ENCODE measurements at regions of chr14 and their contacts with region 1.

Region 1: DNA sequence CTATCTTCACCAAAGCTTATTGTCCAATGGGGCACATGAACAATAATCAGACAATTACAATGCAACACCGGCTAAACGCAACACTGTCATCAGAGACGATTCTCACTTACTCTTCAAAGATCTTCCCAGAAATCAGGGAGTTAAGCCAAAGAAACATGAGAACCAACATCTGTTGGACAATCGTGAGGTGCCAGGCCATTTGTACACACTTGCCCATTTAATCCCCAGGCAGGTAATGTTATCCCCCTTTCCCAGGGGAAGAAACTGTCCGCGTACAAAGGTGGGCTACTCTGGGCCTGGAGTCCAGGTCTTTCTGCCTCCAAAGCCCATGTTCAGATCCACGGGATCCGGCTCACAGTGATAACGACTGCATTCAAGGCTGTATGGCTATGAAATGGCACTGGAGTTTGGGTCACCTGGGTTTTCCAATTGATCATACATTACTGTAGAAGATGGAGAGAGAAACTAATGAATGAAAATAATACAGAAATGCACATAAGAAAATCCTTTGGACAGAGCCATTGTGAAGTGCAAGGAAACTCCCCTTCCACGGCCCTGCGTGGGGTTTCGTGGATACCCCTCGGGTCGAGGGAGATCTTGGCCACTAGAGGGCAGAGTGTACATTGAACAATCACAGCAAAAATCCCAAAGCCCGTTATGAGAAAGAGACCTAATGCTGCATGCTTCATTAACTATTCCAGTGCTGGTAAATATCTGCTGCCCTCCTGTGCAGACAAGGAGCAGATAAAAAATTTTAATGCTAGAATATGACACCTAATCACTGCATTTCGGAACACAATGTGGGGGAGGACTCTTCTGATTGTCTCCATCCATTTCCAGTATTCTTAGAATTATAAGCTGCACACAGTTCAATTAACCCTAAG is 111.4 kb downstream of the EGLN3 start:
- DNase-seq: peak; percentile 61
- H3K4me3 Mint-ChIP-seq: no peak overlapping the region
- H3K27ac Mint-ChIP-seq: no peak overlapping the region
- H3K4me1 Mint-ChIP-seq: no peaks in the 10 kb centered on the region
- H3K27me3 Mint-ChIP-seq: no peaks in the 10 kb centered on the region

Region 2: DNA sequence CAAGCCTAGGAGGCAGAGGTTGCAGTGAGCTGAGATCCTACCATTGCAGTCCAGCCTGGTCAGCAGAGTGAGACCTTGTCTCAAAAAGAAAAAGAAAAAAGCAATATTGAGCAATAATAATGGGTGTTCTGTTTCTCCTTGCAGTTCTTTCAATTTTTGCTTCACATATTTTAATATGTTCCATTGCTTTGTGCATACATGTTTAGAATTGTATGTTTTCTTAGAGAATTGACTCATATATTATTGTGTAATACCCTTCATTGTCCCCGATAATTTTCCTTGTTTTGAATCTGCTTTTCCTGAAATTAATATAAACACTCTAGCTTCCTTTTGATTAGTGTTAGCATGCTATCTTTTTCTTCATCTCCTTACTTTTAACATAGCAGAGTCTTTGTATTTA is 1039.1 kb before region 1 on chr14:
- CTCF ChIA-PET with region 1: no interaction called
- intact Hi-C with region 1: no loop called
- DNase-seq: no peak
- H3K4me3 Mint-ChIP-seq: no peak overlapping the region
- H3K27ac Mint-ChIP-seq: no peak overlapping the region
- H3K4me1 Mint-ChIP-seq: no peaks in the 10 kb centered on the region
- H3K27me3 Mint-ChIP-seq: no peaks in the 10 kb centered on the region

Region 3: DNA sequence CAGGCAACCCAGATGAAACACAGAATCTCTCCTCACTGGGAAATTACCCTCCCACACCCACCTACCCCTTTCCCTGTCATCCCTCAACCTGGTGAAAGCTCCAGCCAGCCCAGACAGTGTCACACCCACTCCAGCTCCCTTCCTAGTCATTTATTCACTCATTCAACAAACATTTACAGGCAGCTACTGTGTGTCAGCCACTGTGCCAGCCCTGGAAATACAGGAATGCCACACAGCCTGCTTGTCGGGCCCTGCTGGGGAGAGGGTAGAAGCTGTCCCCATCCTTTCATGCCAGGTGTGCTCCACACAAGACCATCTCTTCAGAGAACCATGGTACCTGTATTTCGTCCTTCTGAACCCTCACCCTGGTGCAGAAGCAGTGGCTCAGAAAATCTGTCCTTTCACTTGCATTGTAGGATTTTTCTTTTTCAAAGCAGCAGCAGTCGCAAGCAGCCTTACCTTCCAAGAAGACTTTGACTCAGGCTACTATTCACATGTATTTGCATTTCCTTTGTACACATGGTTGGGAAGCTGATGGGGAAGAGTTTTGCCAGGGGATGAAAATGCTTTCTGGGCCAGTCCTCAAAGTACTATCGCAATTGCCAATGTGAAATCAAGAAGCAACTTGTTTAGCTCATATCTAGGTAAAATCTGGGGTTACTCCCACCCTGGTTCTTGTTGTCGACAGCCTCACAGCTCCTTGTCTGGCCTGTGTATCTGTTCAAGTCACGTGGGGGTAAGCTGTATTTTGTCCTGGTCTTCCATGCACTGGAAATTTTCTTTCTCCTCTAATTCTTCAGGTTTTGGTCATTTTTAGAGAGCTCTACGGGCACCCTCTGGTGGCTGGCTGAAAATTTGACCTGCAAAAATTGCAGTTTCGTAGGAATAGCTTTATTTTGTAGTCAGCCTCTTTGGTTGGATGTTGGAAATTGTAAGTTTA is 258.9 kb after region 1 on chr14:
- CTCF ChIA-PET with region 1: interaction called, 14 read pairs
- intact Hi-C with region 1: loop called (anchors 1 kb)
- DNase-seq: peak; percentile 19
- H3K4me3 Mint-ChIP-seq: no peak overlapping the region
- H3K27ac Mint-ChIP-seq: no peak overlapping the region
- H3K4me1 Mint-ChIP-seq: no peaks in the 10 kb centered on the region
- H3K27me3 Mint-ChIP-seq: no peaks in the 10 kb centered on the region

Region 4: DNA sequence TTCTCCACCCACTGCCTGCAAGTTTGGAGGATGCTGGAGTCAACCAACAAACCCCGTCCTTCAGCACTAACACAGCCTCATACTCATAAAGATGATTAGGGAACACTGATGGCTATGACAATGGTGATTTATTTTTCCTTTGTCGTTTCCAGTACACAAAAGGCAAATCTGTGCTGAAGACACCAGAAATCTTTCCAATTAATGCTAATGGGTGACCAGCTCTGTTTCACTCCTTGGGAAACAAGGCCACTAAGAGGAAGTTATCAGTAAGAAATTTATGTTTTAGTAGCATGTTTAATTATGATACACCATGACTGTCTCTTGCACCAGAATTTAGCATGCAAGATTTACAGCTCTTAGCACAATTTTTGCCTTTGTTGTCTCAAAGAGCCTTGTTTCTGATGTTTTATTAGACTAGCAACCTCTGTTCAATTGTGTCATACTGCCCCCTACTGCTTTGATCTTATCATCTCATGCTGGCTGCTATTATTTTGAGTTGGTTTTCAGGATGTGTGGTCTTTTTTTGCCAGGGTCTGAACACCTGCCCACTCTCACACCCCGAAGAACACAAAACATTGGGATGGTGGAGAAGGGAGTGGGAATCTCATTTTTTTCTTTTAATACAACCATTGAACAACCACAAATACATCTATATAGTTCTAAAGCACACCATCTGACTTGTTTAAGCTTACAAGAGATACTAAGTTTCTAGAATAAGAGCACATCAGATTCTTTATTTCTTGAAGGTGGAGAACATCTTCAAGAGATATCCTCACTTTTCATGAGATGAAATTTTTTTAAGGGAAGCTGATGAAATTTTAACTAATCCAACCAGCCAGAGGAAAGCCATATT is 461.7 kb after region 1 on chr14:
- CTCF ChIA-PET with region 1: interaction called, 3 read pairs
- intact Hi-C with region 1: loop called (anchors 2 kb)
- DNase-seq: peak; percentile 13
- H3K4me3 Mint-ChIP-seq: no peak overlapping the region
- H3K27ac Mint-ChIP-seq: no peak overlapping the region
- H3K4me1 Mint-ChIP-seq: no peaks in the 10 kb centered on the region
- H3K27me3 Mint-ChIP-seq: no peaks in the 10 kb centered on the region